ENCODE measurements at regions of chr4 and their contacts with region 1.

Region 1: GRCh38 chr4:78656968-78657445 is 105.4 kb downstream of the ANXA3 start:
- DNase-seq: no peak
- ATAC-seq: peak; percentile 41
- H3K4me3 Mint-ChIP-seq: peak overlapping the region; percentile 43
- H3K27ac Mint-ChIP-seq: peak overlapping the region; percentile 80
- H3K4me1 Mint-ChIP-seq: peaks cover 32% of the 10 kb centered on the region
- H3K27me3 Mint-ChIP-seq: no peaks in the 10 kb centered on the region
- CTCF ChIP-seq: no peak

Region 2: DNA sequence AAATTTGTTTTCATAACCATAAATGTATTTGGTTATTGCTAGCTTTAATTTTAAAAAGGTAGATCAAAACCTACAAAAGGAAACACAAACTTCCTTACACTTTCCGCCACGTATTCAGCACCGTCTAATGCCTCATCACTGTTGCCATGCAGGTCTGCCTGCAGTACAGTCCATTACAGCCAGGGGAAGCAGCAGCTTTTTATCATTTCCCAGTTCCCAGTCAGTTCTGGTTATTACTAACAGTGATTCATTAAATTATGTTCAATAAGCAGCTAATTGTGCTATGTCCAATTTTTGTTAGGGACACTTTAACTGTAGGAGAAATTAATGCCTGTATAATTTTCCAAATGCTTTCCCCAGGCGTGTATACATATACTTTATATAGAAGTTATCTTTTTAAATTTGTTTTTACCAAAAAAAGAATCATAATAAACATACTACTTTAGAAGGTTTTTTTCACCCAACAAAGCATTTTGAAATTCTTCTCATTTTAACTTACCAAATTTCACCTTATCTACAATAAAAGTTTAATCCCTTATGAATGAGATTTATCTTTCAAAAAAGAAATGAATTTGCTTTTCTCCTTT is 12.2 kb before region 1 on chr4:
- CTCF ChIA-PET with region 1: interaction called, 18 read pairs
- POLR2A ChIA-PET with region 1: interaction called, 3 read pairs
- intact Hi-C with region 1: no loop called
- DNase-seq: peak; percentile 70
- ATAC-seq: peak; percentile 98
- H3K4me3 Mint-ChIP-seq: no peak overlapping the region
- H3K27ac Mint-ChIP-seq: no peak overlapping the region
- H3K4me1 Mint-ChIP-seq: peaks cover 12% of the 10 kb centered on the region
- H3K27me3 Mint-ChIP-seq: no peaks in the 10 kb centered on the region
- CTCF ChIP-seq: peak; percentile 83

Region 3: GRCh38 chr4:78720994-78721677 is 64.1 kb after region 1 on chr4:
- CTCF ChIA-PET with region 1: no interaction called
- POLR2A ChIA-PET with region 1: no interaction called
- intact Hi-C with region 1: no loop called
- DNase-seq: peak; percentile 69
- ATAC-seq: peak; percentile 96
- H3K4me3 Mint-ChIP-seq: peak overlapping the region; percentile 63
- H3K27ac Mint-ChIP-seq: peak overlapping the region; percentile 86
- H3K4me1 Mint-ChIP-seq: peaks cover 22% of the 10 kb centered on the region
- H3K27me3 Mint-ChIP-seq: no peaks in the 10 kb centered on the region
- CTCF ChIP-seq: no peak

Region 4: DNA sequence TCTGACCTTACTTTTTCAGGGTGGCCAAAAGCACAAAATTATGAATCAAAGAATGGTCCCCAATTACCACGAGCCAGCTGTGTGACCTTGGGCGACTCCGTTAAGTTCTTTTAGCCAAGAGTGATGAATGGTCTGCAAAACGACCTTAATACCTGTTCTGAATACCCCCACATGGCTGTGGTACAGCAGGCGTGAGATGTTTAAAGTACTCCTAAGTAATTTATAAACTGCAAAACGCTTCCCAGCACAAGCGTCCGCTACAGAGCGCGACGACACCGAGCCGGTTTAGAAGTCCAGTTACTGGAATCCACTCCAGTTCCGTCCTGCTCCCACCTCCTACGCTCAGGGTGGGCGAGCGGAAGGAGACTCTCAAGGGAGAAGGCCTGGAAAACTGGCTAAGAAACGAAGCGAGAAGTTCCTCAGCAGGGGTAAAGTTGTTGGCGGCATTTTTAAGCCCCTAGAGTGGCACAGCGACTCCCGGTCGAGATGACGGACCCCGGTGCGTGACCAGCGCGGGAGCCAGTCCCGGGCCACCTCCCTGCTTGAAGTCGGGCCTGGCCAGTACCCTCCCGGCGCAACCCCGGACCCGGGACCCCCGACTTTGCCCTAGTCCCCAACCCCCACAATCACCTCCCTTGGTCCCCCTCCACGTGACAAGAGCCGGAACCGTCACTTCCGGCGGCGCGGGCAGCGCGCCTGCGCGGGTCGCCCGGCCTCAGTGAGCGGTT is 118.5 kb after region 1 on chr4:
- CTCF ChIA-PET with region 1: interaction called, 3 read pairs
- POLR2A ChIA-PET with region 1: interaction called, 4 read pairs
- intact Hi-C with region 1: loop called (anchors 5 kb)
- DNase-seq: peak; percentile 84
- ATAC-seq: peak; percentile 68
- H3K4me3 Mint-ChIP-seq: peak overlapping the region; percentile 85
- H3K27ac Mint-ChIP-seq: peak overlapping the region; percentile 97
- H3K4me1 Mint-ChIP-seq: peaks cover 31% of the 10 kb centered on the region
- H3K27me3 Mint-ChIP-seq: no peaks in the 10 kb centered on the region
- CTCF ChIP-seq: no peak